B cell (primary cell): ENCODE measurements at regions of chr10 and their contacts with region 1.

Region 1: GRCh38 chr10:62244780-62245467 is 23.7 kb downstream of the RTKN2 start:
- DNase-seq: peak; percentile 78
- ATAC-seq: peak; percentile 70
- H3K4me3 ChIP-seq: peak overlapping the region in 1 of 5 experiments; percentile 39
- H3K4me3 Mint-ChIP-seq: peak overlapping the region; percentile 8
- H3K27ac ChIP-seq: peak overlapping the region; percentile 87 to 93
- H3K27ac Mint-ChIP-seq: peak overlapping the region; percentile 61
- H3K4me1 ChIP-seq: peaks cover 31 to 40% of the 10 kb centered on the region in 2 donors
- H3K4me1 Mint-ChIP-seq: peaks cover 35% of the 10 kb centered on the region
- H3K27me3 ChIP-seq: no peaks in the 10 kb centered on the region
- H3K27me3 Mint-ChIP-seq: no peaks in the 10 kb centered on the region
- CTCF ChIP-seq: peak; percentile 84

Region 2: GRCh38 chr10:60816628-60817397 is 1428.1 kb before region 1 on chr10:
- CTCF ChIA-PET with region 1: no interaction called
- POLR2A ChIA-PET with region 1: no interaction called
- intact Hi-C with region 1: loop called (anchors 10 kb)
- DNase-seq: peak; percentile 75
- ATAC-seq: peak; percentile 65
- H3K4me3 ChIP-seq: no peak overlapping the region
- H3K4me3 Mint-ChIP-seq: no peak overlapping the region
- H3K27ac ChIP-seq: no peak overlapping the region
- H3K27ac Mint-ChIP-seq: no peak overlapping the region
- H3K4me1 ChIP-seq: peaks cover 0 to 3% of the 10 kb centered on the region in 2 donors
- H3K4me1 Mint-ChIP-seq: peaks cover 7% of the 10 kb centered on the region
- H3K27me3 ChIP-seq: no peaks in the 10 kb centered on the region
- H3K27me3 Mint-ChIP-seq: no peaks in the 10 kb centered on the region
- CTCF ChIP-seq: peak; percentile 93

Region 3: DNA sequence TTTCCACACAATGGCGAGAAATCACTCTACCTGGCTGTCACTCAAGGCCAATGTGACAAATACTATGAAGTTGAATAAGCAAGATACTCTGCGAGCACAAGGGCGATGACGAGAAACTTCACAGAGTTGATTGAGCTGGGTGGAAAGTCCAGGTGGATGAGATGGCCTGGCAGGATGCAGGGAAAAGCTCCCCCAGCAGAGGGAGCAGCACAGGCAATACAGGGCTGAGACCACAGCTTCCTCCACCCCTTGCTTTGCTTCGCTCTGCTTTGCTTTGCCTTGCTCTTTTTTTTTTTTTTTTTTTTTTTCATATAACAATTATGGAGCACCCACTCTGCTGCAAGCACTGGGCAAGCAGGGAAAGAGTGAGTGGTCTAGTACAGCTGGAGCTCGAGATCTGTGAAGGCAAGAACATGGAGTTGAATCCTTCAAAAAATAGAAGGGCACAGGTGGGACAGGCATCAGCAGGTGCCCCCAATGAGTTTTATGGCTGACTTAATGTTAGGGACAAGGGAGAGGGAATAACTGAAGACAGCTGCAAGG is 493.9 kb before region 1 on chr10:
- CTCF ChIA-PET with region 1: interaction called, 50 read pairs
- POLR2A ChIA-PET with region 1: interaction called, 3 read pairs
- intact Hi-C with region 1: loop called (anchors 1 kb)
- DNase-seq: peak; percentile 79
- ATAC-seq: peak; percentile 97
- H3K4me3 ChIP-seq: no peak overlapping the region
- H3K4me3 Mint-ChIP-seq: peak overlapping the region; percentile 52
- H3K27ac ChIP-seq: no peak overlapping the region
- H3K27ac Mint-ChIP-seq: peak overlapping the region; percentile 24
- H3K4me1 ChIP-seq: peaks cover 17 to 19% of the 10 kb centered on the region in 2 donors
- H3K4me1 Mint-ChIP-seq: peaks cover 27% of the 10 kb centered on the region
- H3K27me3 ChIP-seq: no peaks in the 10 kb centered on the region
- H3K27me3 Mint-ChIP-seq: no peaks in the 10 kb centered on the region
- CTCF ChIP-seq: peak; percentile 76

Region 4: GRCh38 chr10:61903221-61903927 is 341.6 kb before region 1 on chr10:
- CTCF ChIA-PET with region 1: interaction called, 34 read pairs
- POLR2A ChIA-PET with region 1: no interaction called
- intact Hi-C with region 1: loop called (anchors 1 kb)
- DNase-seq: peak; percentile 91
- ATAC-seq: peak; percentile 55
- H3K4me3 ChIP-seq: peak overlapping the region; percentile 69 to 98 (median 80)
- H3K4me3 Mint-ChIP-seq: peak overlapping the region; percentile 98
- H3K27ac ChIP-seq: peak overlapping the region; percentile 95 to 97
- H3K27ac Mint-ChIP-seq: peak overlapping the region; percentile 99
- H3K4me1 ChIP-seq: peaks cover 40 to 47% of the 10 kb centered on the region in 2 donors
- H3K4me1 Mint-ChIP-seq: peaks cover 49% of the 10 kb centered on the region
- H3K27me3 ChIP-seq: no peaks in the 10 kb centered on the region
- H3K27me3 Mint-ChIP-seq: no peaks in the 10 kb centered on the region
- CTCF ChIP-seq: peak; percentile 38

Region 5: GRCh38 chr10:62038609-62039190 is 206.2 kb before region 1 on chr10:
- CTCF ChIA-PET with region 1: interaction called, 184 read pairs
- POLR2A ChIA-PET with region 1: interaction called, 3 read pairs
- intact Hi-C with region 1: loop called (anchors 1 kb)
- DNase-seq: peak; percentile 85
- ATAC-seq: peak; percentile 63
- H3K4me3 ChIP-seq: peak overlapping the region in 3 of 5 experiments; percentile 19 to 50 (median 27)
- H3K4me3 Mint-ChIP-seq: peak overlapping the region; percentile 74
- H3K27ac ChIP-seq: peak overlapping the region; percentile 59 to 84
- H3K27ac Mint-ChIP-seq: peak overlapping the region; percentile 87
- H3K4me1 ChIP-seq: peaks cover 74 to 81% of the 10 kb centered on the region in 2 donors
- H3K4me1 Mint-ChIP-seq: peaks cover 83% of the 10 kb centered on the region
- H3K27me3 ChIP-seq: no peaks in the 10 kb centered on the region
- H3K27me3 Mint-ChIP-seq: no peaks in the 10 kb centered on the region
- CTCF ChIP-seq: peak; percentile 89

Region 6: DNA sequence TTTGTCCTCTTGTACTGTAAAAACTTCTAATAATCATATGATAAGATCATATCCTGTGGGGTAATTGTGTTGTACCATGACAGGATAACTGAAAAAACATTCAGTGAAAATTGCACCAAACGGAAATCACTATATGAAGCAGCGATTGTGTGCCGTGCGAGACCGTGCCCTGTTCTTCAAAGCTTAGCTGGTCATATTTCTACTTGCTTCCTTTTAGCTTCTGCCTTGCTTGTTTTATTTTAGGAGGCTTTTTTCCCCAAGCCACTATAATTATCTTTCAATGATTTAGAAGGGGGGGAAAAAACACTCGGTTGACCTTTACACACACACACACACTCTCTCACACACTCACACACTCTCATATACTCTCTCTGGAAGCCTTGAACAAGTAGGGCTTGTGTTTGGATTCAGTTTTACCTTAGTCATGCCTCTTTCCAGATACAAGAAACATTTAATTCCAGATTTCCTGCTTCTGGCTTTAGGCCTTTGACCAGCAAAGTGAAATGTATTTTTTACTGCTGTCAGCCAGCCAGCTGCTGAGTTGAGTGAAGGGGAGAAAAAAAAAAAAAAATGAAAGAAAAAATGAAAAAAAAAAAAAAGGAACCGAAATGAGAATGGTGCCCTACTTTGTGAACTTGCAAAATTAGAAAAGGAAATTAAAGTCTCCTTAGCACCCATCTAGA is 162.1 kb before region 1 on chr10:
- CTCF ChIA-PET with region 1: interaction called, 12 read pairs
- POLR2A ChIA-PET with region 1: no interaction called
- intact Hi-C with region 1: no loop called
- DNase-seq: no peak
- ATAC-seq: peak; percentile 29
- H3K4me3 ChIP-seq: peak overlapping the region; percentile 10 to 38 (median 36)
- H3K4me3 Mint-ChIP-seq: peak overlapping the region; percentile 79
- H3K27ac ChIP-seq: peak overlapping the region; percentile 90 to 91
- H3K27ac Mint-ChIP-seq: peak overlapping the region; percentile 86
- H3K4me1 ChIP-seq: peaks cover 76 to 78% of the 10 kb centered on the region in 2 donors
- H3K4me1 Mint-ChIP-seq: peaks cover 79% of the 10 kb centered on the region
- H3K27me3 ChIP-seq: no peaks in the 10 kb centered on the region
- H3K27me3 Mint-ChIP-seq: no peaks in the 10 kb centered on the region
- CTCF ChIP-seq: no peak

Region 7: DNA sequence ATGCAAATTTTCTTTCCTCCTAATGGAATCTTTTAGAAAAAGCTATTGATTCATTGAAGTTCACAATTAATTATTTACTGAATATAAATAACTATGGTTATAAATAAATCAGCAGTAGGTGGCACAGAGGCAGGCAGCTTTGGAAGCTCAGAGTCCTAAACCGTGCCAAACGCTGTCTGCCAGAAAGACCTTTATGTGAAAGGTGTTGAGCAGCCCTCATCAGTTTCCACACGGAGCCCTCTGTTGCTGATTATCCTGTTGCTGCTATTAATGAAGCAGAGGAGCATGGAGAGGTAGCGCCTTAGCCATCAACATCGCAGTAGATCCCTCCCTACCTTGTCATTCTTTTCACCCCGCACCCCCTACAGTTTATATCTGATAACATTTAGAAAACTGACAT is 27.2 kb before region 1 on chr10:
- CTCF ChIA-PET with region 1: no interaction called
- POLR2A ChIA-PET with region 1: no interaction called
- intact Hi-C with region 1: no loop called
- DNase-seq: no peak
- ATAC-seq: no peak
- H3K4me3 ChIP-seq: no peak overlapping the region
- H3K4me3 Mint-ChIP-seq: no peak overlapping the region
- H3K27ac ChIP-seq: no peak overlapping the region
- H3K27ac Mint-ChIP-seq: no peak overlapping the region
- H3K4me1 ChIP-seq: no peaks in the 10 kb centered on the region
- H3K4me1 Mint-ChIP-seq: no peaks in the 10 kb centered on the region
- H3K27me3 ChIP-seq: no peaks in the 10 kb centered on the region
- H3K27me3 Mint-ChIP-seq: no peaks in the 10 kb centered on the region
- CTCF ChIP-seq: no peak

Region 8: GRCh38 chr10:62268399-62269114 is 23.6 kb after region 1 on chr10 and contains the start of gene RTKN2:
- CTCF ChIA-PET with region 1: interaction called, 14 read pairs
- POLR2A ChIA-PET with region 1: no interaction called
- intact Hi-C with region 1: loop called (anchors 2 kb)
- DNase-seq: peak; percentile 81
- ATAC-seq: peak; percentile 90
- H3K4me3 ChIP-seq: peak within 1 kb of the TSS; percentile 51 to 73 (median 68)
- H3K4me3 Mint-ChIP-seq: peak within 1 kb of the TSS; percentile 92
- H3K27ac ChIP-seq: peak within 1 kb of the TSS in 1 of 2 donors; percentile 25
- H3K27ac Mint-ChIP-seq: no peak within 1 kb of the TSS
- H3K4me1 ChIP-seq: peaks cover 14 to 15% of the 10 kb centered on the region in 2 donors
- H3K4me1 Mint-ChIP-seq: peaks cover 11% of the 10 kb centered on the region
- H3K27me3 ChIP-seq: peaks cover 0 to 17% (median 9%) of the 10 kb centered on the region in 4 experiments
- H3K27me3 Mint-ChIP-seq: peaks cover 14% of the 10 kb centered on the region
- CTCF ChIP-seq: no peak
- total RNA-seq, gene RTKN2: 0.22 and 0.53 TPM in 2 replicates

Region 9: DNA sequence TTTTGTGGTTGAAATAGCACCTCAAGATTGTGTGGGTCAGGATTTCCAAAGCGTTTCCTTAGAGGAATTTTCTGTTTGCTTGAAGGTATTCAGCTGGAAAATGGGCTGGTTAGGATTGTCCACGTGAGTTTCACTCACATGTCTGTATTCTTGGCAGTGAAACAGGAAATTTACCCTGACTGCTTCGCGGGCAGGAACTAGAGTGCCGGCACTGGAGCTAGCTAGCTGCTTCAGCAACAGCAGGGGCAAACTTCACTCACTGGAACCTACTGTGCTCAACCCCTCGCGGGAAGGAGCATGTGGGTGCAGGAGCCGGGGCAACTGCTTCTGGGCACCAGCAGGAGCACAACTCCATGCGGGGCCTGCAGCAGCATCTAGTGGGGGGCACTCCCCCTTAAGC is 61.7 kb after region 1 on chr10:
- CTCF ChIA-PET with region 1: no interaction called
- POLR2A ChIA-PET with region 1: no interaction called
- intact Hi-C with region 1: no loop called
- DNase-seq: peak; percentile 5
- ATAC-seq: no peak
- H3K4me3 ChIP-seq: no peak overlapping the region
- H3K4me3 Mint-ChIP-seq: peak overlapping the region; percentile 35
- H3K27ac ChIP-seq: no peak overlapping the region
- H3K27ac Mint-ChIP-seq: no peak overlapping the region
- H3K4me1 ChIP-seq: peaks cover 0 to 18% of the 10 kb centered on the region in 2 donors
- H3K4me1 Mint-ChIP-seq: peaks cover 19% of the 10 kb centered on the region
- H3K27me3 ChIP-seq: no peaks in the 10 kb centered on the region
- H3K27me3 Mint-ChIP-seq: peaks cover 16% of the 10 kb centered on the region
- CTCF ChIP-seq: no peak